ENCODE measurements at regions of chr15 and their contacts with region 1.

Region 1: GRCh38 chr15:40928821-40929659 is at the start of gene DLL4:
- DNase-seq: peak; percentile 57 to 73
- ATAC-seq: peak; percentile 54 to 74
- H3K4me3 ChIP-seq: peak within 1 kb of the TSS; percentile 48
- H3K27ac ChIP-seq: peak within 1 kb of the TSS in 1 of 2 experiments; percentile 63; a peak in 3 of 6 replicates
- H3K4me1 ChIP-seq: peaks cover 24% of the 10 kb centered on the region; the same call in 1 of the 3 replicates
- CTCF ChIP-seq: no peak
- EP300 ChIP-seq: no peak
- POLR2A ChIP-seq: peak; percentile 70
- RAD21 ChIP-seq: no peak
- polyA plus RNA-seq, gene DLL4: 0.09 and 0.16 TPM in 2 replicates

Region 2: DNA sequence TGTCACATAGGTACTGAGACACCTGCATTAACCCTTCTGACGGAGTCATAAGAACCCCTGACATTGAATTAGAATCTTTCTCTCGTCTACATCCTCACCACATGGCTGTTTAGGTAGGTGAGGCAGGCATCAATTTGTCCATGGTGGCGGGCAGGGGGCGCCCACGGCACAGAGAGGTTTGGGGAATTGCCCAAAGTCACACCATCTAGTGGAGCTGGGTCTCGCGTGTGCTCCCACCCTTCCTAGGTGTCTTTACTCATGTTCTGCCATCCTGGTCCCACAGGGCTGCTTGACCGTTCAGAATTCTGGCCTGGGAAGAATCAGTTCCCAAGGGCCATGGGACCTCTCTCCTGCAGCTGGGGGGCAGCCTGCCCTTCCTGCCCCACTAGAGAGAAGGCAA is 14.6 kb before region 1 on chr15:
- CTCF ChIA-PET with region 1: interaction called, 16 read pairs
- POLR2A ChIA-PET with region 1: interaction called, 4 read pairs
- DNase-seq: no peak
- ATAC-seq: peak in 1 of 2 experiments; percentile 52; a peak in 3 of 6 replicates
- H3K4me3 ChIP-seq: no peak overlapping the region
- H3K27ac ChIP-seq: no peak overlapping the region
- H3K4me1 ChIP-seq: peaks cover 6% of the 10 kb centered on the region; the same call in 2 of the 3 replicates
- CTCF ChIP-seq: peak; percentile 18; the same call in 1 of the 3 replicates
- EP300 ChIP-seq: no peak
- POLR2A ChIP-seq: no peak
- RAD21 ChIP-seq: peak; percentile 28 to 46; a peak in 4 of 5 replicates

Region 3: GRCh38 chr15:40952901-40953712 is 24.1 kb after region 1 on chr15 and contains the start of gene CHAC1:
- CTCF ChIA-PET with region 1: interaction called, 4 read pairs
- POLR2A ChIA-PET with region 1: interaction called, 10 read pairs
- DNase-seq: peak; percentile 94 to 97
- ATAC-seq: peak; percentile 96
- H3K4me3 ChIP-seq: peak within 1 kb of the TSS; percentile 94
- H3K27ac ChIP-seq: peak within 1 kb of the TSS; percentile 98 to 99
- H3K4me1 ChIP-seq: peaks cover 33% of the 10 kb centered on the region
- CTCF ChIP-seq: no peak
- EP300 ChIP-seq: no peak
- POLR2A ChIP-seq: no peak; the same call in none of the 2 replicates
- RAD21 ChIP-seq: no peak
- polyA plus RNA-seq, gene CHAC1: 22.2 and 25.3 TPM in 2 replicates

Region 4: GRCh38 chr15:41022487-41023090 is 93.5 kb after region 1 on chr15:
- CTCF ChIA-PET with region 1: interaction called, 22 read pairs
- POLR2A ChIA-PET with region 1: no interaction called
- DNase-seq: peak; percentile 31 to 51
- ATAC-seq: peak; percentile 83 to 85
- H3K4me3 ChIP-seq: no peak overlapping the region
- H3K27ac ChIP-seq: no peak overlapping the region
- H3K4me1 ChIP-seq: no peaks in the 10 kb centered on the region
- CTCF ChIP-seq: peak; percentile 57
- EP300 ChIP-seq: no peak
- POLR2A ChIP-seq: no peak
- RAD21 ChIP-seq: peak; percentile 68 to 75